A549 (cell line): ENCODE measurements at regions of chr20 and their contacts with region 1.

Region 1: GRCh38 chr20:35619196-35620095 is 3.8 kb downstream of the SPAG4 start:
- DNase-seq: peak; percentile 89 to 96
- ATAC-seq: peak; percentile 66 to 79
- H3K4me3 ChIP-seq: peak overlapping the region; percentile 61
- H3K27ac ChIP-seq: peak overlapping the region; percentile 80 to 90
- H3K4me1 ChIP-seq: peaks cover 18% of the 10 kb centered on the region
- CTCF ChIP-seq: peak; percentile 75
- EP300 ChIP-seq: no peak
- POLR2A ChIP-seq: peak; percentile 37; the same call in 1 of the 2 replicates
- RAD21 ChIP-seq: peak in 1 of 2 experiments; percentile 35; a peak in 3 of 5 replicates

Region 2: DNA sequence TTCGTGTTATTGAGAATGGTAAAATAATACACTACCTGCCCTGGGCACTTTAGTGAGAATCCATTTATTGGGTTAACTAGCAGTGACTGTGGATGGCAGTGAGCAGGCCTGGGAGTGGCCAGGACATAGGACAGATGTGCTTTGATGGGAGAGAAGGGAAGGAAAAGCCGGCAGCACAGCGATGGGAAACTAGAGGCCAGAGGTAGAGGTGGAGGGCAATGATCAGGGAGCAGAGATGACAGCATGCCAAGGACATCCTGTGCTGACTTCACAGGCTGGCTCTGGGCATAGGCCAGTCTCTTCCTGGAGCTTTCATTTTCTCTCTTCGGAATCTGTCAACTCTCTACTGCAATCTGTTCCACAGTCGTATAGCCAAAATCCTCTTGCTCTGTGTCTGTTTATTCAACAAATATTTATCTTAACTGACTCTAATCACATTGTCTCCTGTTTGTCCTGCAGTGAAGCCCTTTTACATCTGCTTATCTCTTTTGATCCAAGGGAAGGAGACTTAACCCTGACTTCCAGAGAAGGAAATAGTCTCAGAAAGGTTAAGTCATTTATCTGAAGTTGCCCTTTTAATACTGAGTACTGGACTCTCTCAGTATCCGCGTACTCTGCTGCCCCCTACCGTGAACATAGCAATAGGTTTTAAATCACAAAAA is 411.4 kb before region 1 on chr20:
- CTCF ChIA-PET with region 1: no interaction called
- POLR2A ChIA-PET with region 1: no interaction called
- DNase-seq: peak; percentile 53 to 91
- ATAC-seq: peak; percentile 95 to 96
- H3K4me3 ChIP-seq: no peak overlapping the region
- H3K27ac ChIP-seq: peak overlapping the region; percentile 75 to 91
- H3K4me1 ChIP-seq: peaks cover 29% of the 10 kb centered on the region
- CTCF ChIP-seq: peak; percentile 91
- EP300 ChIP-seq: no peak; a peak in 1 of 5 replicates
- POLR2A ChIP-seq: no peak
- RAD21 ChIP-seq: peak; percentile 93 to 98

Region 3: DNA sequence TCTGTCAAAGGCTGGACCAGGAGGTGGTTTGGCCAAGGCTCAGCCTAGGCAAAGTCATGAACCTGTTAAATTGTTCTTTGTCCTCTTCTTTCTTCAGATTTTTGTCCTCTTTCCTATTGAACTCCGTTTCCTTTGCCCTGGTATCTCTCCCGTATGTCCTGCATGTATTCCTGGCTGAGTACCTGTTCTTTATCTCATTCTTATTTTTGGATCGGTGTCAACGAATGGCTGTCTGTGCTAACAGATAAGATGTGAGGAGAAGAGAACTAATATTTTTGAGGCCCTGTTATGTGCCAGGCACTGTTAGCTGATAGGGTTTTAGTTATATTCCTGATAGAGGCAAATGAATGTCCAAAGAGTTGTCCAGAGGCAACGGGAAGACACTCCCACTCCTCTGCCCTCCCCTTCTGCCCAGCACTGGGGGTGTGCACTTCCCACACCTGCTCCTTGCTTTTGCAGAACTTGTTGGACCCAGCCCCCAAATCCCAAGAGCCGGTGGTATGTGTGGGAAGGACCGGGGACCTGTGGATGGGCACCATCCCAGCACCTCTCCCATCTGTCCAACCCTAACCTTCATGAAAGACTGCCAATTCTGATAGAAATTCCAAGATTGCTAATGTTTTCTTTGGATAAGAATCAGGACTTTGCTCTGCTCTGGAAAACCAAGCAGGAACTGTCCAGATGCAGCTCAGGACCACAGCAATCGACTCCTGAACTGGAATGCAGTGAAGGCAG is 362.1 kb before region 1 on chr20:
- CTCF ChIA-PET with region 1: no interaction called
- POLR2A ChIA-PET with region 1: no interaction called
- DNase-seq: peak in 1 of 2 experiments; percentile 81
- ATAC-seq: peak; percentile 36 to 76
- H3K4me3 ChIP-seq: no peak overlapping the region
- H3K27ac ChIP-seq: peak overlapping the region; percentile 93 to 97
- H3K4me1 ChIP-seq: peaks cover 69% of the 10 kb centered on the region
- CTCF ChIP-seq: no peak
- EP300 ChIP-seq: peak in 1 of 2 experiments; percentile 63; a peak in 1 of 5 replicates
- POLR2A ChIP-seq: no peak
- RAD21 ChIP-seq: no peak

Region 4: DNA sequence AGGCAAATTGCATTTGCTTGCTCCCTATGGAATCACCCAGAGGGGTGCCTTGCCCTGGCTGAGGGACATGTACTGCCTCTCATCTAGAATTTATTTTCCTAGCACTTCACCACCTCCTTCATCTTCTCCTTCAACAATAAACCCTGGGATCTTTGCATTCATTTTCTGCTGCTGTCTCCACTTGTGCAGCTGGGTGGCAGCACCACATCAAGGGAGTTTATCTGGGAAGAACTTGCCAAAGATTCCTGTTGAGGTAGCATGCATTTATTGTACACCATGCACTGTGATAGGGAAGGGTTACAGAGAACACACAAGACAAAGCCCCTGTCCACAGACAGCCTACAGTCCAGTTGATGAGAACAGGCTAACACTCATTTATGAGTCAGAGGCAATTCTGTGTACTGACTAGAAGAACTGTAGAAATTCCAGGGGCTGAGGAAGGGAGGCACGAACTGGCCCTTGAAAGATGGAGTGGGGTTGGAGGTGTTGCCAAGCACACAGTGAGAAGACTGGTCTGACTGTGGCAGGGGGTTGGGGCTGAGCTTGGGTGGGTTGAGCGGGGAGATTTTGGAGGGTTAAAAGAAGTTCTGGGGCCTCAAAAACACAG is 107.5 kb before region 1 on chr20:
- CTCF ChIA-PET with region 1: interaction called, 15 read pairs
- POLR2A ChIA-PET with region 1: no interaction called
- DNase-seq: peak; percentile 34 to 58
- ATAC-seq: peak; percentile 41 to 57; a peak in 3 of 6 replicates
- H3K4me3 ChIP-seq: no peak overlapping the region
- H3K27ac ChIP-seq: no peak overlapping the region
- H3K4me1 ChIP-seq: peaks cover 11% of the 10 kb centered on the region; the same call in 2 of the 3 replicates
- CTCF ChIP-seq: peak; percentile 62
- EP300 ChIP-seq: no peak
- POLR2A ChIP-seq: no peak
- RAD21 ChIP-seq: peak; percentile 66 to 79

Region 5: GRCh38 chr20:35629427-35630145 is 10.1 kb after region 1 on chr20:
- CTCF ChIA-PET with region 1: interaction called, 73 read pairs
- POLR2A ChIA-PET with region 1: interaction called, 5 read pairs
- DNase-seq: no peak
- ATAC-seq: peak in 1 of 2 experiments; percentile 46; a peak in 1 of 6 replicates
- H3K4me3 ChIP-seq: no peak overlapping the region
- H3K27ac ChIP-seq: no peak overlapping the region
- H3K4me1 ChIP-seq: peaks cover 8% of the 10 kb centered on the region; the same call in 2 of the 3 replicates
- CTCF ChIP-seq: no peak
- EP300 ChIP-seq: no peak
- POLR2A ChIP-seq: no peak
- RAD21 ChIP-seq: no peak

Region 6: GRCh38 chr20:35648836-35649235 is 29.4 kb after region 1 on chr20:
- CTCF ChIA-PET with region 1: interaction called, 21 read pairs
- POLR2A ChIA-PET with region 1: no interaction called
- DNase-seq: no peak
- ATAC-seq: no peak
- H3K4me3 ChIP-seq: no peak overlapping the region
- H3K27ac ChIP-seq: no peak overlapping the region
- H3K4me1 ChIP-seq: no peaks in the 10 kb centered on the region; the same call in 2 of the 3 replicates
- CTCF ChIP-seq: no peak
- EP300 ChIP-seq: no peak
- POLR2A ChIP-seq: no peak
- RAD21 ChIP-seq: no peak